ENCODE measurements at regions of chr5 and their contacts with region 1.

Region 1: GRCh38 chr5:112921833-112922817 is at the start of gene REEP5:
- DNase-seq: peak; percentile 74 to 85 (median 81)
- H3K4me3 ChIP-seq: peak within 1 kb of the TSS; percentile 97
- H3K27ac ChIP-seq: peak within 1 kb of the TSS; percentile 96 to 98
- H3K4me1 ChIP-seq: peaks cover 5% of the 10 kb centered on the region
- H3K27me3 ChIP-seq: no peaks in the 10 kb centered on the region
- CTCF ChIP-seq: peak; percentile 46 to 89 (median 87)
- EP300 ChIP-seq: no peak
- POLR2A ChIP-seq: peak; percentile 78
- total RNA-seq, gene REEP5: 55.1 to 73.8 (median 67.6) TPM

Region 2: GRCh38 chr5:112625689-112626438 is 296.3 kb before region 1 on chr5:
- intact Hi-C with region 1: no loop called
- DNase-seq: no peak
- H3K4me3 ChIP-seq: no peak overlapping the region
- H3K27ac ChIP-seq: no peak overlapping the region
- H3K4me1 ChIP-seq: peaks cover 4% of the 10 kb centered on the region
- H3K27me3 ChIP-seq: no peaks in the 10 kb centered on the region
- CTCF ChIP-seq: no peak
- EP300 ChIP-seq: no peak
- POLR2A ChIP-seq: no peak

Region 3: DNA sequence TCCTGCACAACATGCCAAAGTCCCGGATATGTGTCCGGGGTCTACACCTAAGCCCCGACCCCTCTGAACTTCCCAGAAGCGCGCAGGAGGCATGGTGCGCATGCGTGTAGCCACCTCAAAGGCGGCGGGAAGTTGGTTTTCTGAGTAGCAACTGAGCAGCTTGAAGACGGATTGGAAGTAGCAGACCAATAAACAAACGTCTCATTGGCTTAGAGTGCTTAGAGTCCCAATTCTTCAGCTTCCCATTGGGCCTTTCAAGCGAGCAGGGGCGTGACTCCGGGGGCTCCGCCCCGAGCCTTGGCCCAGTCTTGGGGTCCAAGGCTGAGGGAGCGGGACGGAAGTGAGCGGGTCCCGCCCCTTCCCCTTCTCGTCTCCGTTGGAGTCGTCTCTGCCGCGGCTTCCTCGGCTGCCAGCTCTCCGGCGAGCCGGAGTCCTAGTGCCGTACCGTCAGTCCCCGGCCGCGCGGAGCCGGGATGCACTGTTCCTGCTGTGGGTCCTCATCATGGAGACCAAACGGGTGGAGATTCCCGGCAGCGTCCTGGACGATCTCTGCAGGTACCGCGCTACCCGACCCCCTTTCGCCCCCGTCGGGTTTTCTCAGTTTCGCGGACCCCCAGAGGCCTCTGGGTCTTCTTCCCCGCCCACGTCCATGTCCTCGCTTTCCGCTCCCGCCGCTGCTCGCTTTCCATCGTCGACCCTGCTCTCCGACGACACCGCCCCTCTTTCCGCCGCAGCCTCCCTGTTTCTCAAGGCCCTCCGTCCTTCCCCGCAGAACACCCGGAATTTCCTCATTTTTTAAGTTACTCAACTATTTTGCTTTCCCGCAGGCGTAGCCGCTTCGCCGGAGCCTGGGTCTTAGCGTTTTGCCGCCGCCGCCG is 54.5 kb after region 1 on chr5 and contains the start of gene DCP2:
- intact Hi-C with region 1: loop called in 1 of 4 experiments (anchors 10 kb)
- DNase-seq: peak; percentile 94 to 96 (median 95)
- H3K4me3 ChIP-seq: peak within 1 kb of the TSS; percentile 85
- H3K27ac ChIP-seq: peak within 1 kb of the TSS; percentile 69 to 85
- H3K4me1 ChIP-seq: peaks cover 7% of the 10 kb centered on the region
- H3K27me3 ChIP-seq: no peaks in the 10 kb centered on the region
- CTCF ChIP-seq: no peak
- EP300 ChIP-seq: no peak
- POLR2A ChIP-seq: peak; percentile 71
- total RNA-seq, gene DCP2: 16.4 to 58.7 (median 41.7) TPM